B cell (primary cell): ENCODE measurements at regions of chr12 and their contacts with region 1.

Region 1: GRCh38 chr12:6533923-6534694 is at the start of gene GAPDH:
- DNase-seq: peak; percentile 91
- ATAC-seq: peak; percentile 71
- H3K4me3 ChIP-seq: peak within 1 kb of the TSS; percentile 71 to 97 (median 92)
- H3K4me3 Mint-ChIP-seq: peak within 1 kb of the TSS; percentile 99
- H3K27ac ChIP-seq: peak within 1 kb of the TSS; percentile 74 to 80
- H3K27ac Mint-ChIP-seq: peak within 1 kb of the TSS; percentile 98
- H3K4me1 ChIP-seq: peaks cover 27 to 37% of the 10 kb centered on the region in 2 donors
- H3K4me1 Mint-ChIP-seq: peaks cover 48% of the 10 kb centered on the region
- H3K27me3 ChIP-seq: no peaks in the 10 kb centered on the region
- H3K27me3 Mint-ChIP-seq: no peaks in the 10 kb centered on the region
- CTCF ChIP-seq: no peak
- total RNA-seq, gene GAPDH: 499 and 507 TPM in 2 replicates

Region 2: DNA sequence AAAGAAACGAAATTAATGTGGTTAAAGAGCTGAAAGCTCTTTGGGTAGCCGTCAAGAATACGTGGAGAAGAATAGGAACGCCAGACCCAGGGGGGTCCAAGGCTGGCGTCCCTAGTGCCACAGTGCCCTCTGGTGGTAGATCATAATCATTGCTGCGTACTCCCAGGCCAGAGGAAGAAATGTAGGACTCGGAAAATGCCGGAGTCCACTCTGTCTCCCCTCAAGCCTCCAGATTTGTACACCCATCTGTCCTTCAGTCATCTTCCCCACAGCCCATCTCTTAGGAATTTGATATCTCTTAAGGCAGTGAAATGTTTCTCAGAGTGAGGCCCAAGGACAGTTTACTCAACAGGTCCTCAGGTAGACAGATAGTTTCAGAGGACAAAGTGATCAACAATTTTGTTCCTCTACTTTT is 249.0 kb before region 1 on chr12:
- CTCF ChIA-PET with region 1: interaction called, 5 read pairs
- POLR2A ChIA-PET with region 1: no interaction called
- intact Hi-C with region 1: loop called (anchors 5 kb)
- DNase-seq: peak; percentile 78
- ATAC-seq: peak; percentile 85
- H3K4me3 ChIP-seq: no peak overlapping the region
- H3K4me3 Mint-ChIP-seq: no peak overlapping the region
- H3K27ac ChIP-seq: no peak overlapping the region
- H3K27ac Mint-ChIP-seq: no peak overlapping the region
- H3K4me1 ChIP-seq: peaks cover 0 to 5% of the 10 kb centered on the region in 2 donors
- H3K4me1 Mint-ChIP-seq: no peaks in the 10 kb centered on the region
- H3K27me3 ChIP-seq: peaks cover 0 to 11% (median 6%) of the 10 kb centered on the region in 4 experiments
- H3K27me3 Mint-ChIP-seq: peaks cover 51% of the 10 kb centered on the region
- CTCF ChIP-seq: peak; percentile 97

Region 3: GRCh38 chr12:6451348-6452244 is 82.5 kb before region 1 on chr12 and contains the start of gene TAPBPL:
- CTCF ChIA-PET with region 1: interaction called, 11 read pairs
- POLR2A ChIA-PET with region 1: interaction called, 11 read pairs
- intact Hi-C with region 1: no loop called
- DNase-seq: peak; percentile 91
- ATAC-seq: peak; percentile 81
- H3K4me3 ChIP-seq: peak within 1 kb of the TSS; percentile 86 to 97 (median 94)
- H3K4me3 Mint-ChIP-seq: peak within 1 kb of the TSS; percentile 97
- H3K27ac ChIP-seq: peak within 1 kb of the TSS; percentile 96 to 98
- H3K27ac Mint-ChIP-seq: peak within 1 kb of the TSS; percentile 99
- H3K4me1 ChIP-seq: peaks cover 33 to 55% of the 10 kb centered on the region in 2 donors
- H3K4me1 Mint-ChIP-seq: peaks cover 64% of the 10 kb centered on the region
- H3K27me3 ChIP-seq: no peaks in the 10 kb centered on the region
- H3K27me3 Mint-ChIP-seq: no peaks in the 10 kb centered on the region
- CTCF ChIP-seq: no peak
- total RNA-seq, gene TAPBPL: 71.2 and 80.5 TPM in 2 replicates

Region 4: DNA sequence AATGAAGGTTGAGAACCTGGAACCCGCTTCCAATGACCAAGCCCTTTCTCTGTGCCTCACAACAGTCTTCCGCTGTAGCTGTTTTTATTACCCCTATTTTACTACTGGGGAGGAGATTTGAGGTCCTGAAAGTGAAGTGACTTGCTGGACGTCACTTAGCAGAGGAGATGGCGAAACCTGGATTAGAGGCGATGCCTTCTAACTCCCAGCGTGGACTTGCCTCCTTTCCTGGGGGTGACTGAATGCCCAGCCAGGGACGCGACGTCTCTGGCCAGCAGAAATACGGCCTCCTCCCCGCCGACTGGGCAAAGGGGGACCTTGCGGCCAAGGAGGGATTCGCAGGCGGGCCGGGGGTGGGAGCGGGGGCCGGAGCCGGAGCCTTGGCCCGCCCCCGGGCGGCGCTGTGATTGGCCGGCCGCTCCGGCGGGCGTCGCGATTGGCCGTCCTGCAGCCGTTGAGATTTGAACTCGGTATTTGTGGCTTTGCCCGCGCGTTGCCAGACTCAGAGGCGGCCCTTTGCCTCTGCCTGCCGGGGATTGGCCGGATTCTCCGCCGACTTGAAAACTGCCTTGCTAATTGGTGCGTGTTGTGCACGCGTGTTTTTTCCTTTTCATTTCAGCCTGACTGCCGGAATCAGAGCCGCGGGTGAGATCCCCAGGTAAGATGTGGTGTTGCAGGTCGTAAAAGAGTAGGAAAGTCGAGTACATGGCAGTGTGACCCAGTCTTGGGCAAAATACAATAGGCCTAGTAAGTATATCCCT is 40.4 kb before region 1 on chr12 and contains the start of gene NCAPD2:
- CTCF ChIA-PET with region 1: interaction called, 24 read pairs
- POLR2A ChIA-PET with region 1: interaction called, 10 read pairs
- intact Hi-C with region 1: loop called (anchors 1 kb)
- DNase-seq: peak; percentile 97
- ATAC-seq: peak; percentile 86
- H3K4me3 ChIP-seq: peak within 1 kb of the TSS; percentile 68 to 100 (median 95)
- H3K4me3 Mint-ChIP-seq: peak within 1 kb of the TSS; percentile 98
- H3K27ac ChIP-seq: peak within 1 kb of the TSS; percentile 92 to 95
- H3K27ac Mint-ChIP-seq: peak within 1 kb of the TSS; percentile 95
- H3K4me1 ChIP-seq: peaks cover 22 to 27% of the 10 kb centered on the region in 2 donors
- H3K4me1 Mint-ChIP-seq: peaks cover 31% of the 10 kb centered on the region
- H3K27me3 ChIP-seq: no peaks in the 10 kb centered on the region
- H3K27me3 Mint-ChIP-seq: no peaks in the 10 kb centered on the region
- CTCF ChIP-seq: peak; percentile 22
- total RNA-seq, gene NCAPD2: 41.1 and 42.1 TPM in 2 replicates

Region 5: GRCh38 chr12:6554168-6555017 is 20.3 kb after region 1 on chr12:
- CTCF ChIA-PET with region 1: interaction called, 69 read pairs
- POLR2A ChIA-PET with region 1: interaction called, 6 read pairs
- intact Hi-C with region 1: loop called (anchors 2 kb)
- DNase-seq: peak; percentile 82
- ATAC-seq: peak; percentile 70
- H3K4me3 ChIP-seq: peak overlapping the region in 4 of 5 experiments; percentile 52 to 93 (median 84)
- H3K4me3 Mint-ChIP-seq: peak overlapping the region; percentile 89
- H3K27ac ChIP-seq: no peak overlapping the region
- H3K27ac Mint-ChIP-seq: peak overlapping the region; percentile 67
- H3K4me1 ChIP-seq: peaks cover 12 to 38% of the 10 kb centered on the region in 2 donors
- H3K4me1 Mint-ChIP-seq: peaks cover 36% of the 10 kb centered on the region
- H3K27me3 ChIP-seq: no peaks in the 10 kb centered on the region
- H3K27me3 Mint-ChIP-seq: no peaks in the 10 kb centered on the region
- CTCF ChIP-seq: peak; percentile 81